HepG2 (cell line): ENCODE measurements at regions of chr21 and their contacts with region 1.

Region 1: DNA sequence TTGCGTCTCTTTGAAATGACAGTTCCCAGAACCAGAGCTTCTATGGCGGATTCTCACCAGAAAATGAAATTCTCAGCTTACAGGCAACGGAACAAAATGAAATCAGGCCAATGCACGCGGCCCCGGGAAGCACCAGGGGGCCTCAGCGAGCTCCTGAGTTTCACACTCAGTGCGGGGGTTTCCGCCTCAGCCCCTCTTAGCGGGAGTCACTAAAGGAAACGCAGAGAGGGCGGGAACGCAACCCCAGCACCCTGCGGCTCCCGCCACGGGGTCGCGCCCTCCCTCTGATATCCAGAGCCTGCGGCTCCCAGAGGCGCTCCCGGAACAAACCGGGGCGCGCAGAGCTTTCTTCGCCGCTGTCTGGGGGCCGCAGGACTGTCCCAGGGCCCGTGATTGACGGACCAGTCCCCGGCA is 7.9 kb upstream of the COL6A1 start:
- DNase-seq: peak; percentile 49
- ATAC-seq: peak; percentile 61
- H3K4me3 ChIP-seq: peak overlapping the region; percentile 52 to 75 (median 55); a peak in 5 of 6 replicates
- H3K27ac ChIP-seq: no peak overlapping the region
- H3K4me1 ChIP-seq: peaks cover 31% of the 10 kb centered on the region
- H3K27me3 ChIP-seq: peaks cover 19 to 46% of the 10 kb centered on the region in 2 experiments
- CTCF ChIP-seq: peak; percentile 69
- EP300 ChIP-seq: no peak
- POLR2A ChIP-seq: no peak
- RAD21 ChIP-seq: peak; percentile 42; the same call in 1 of the 2 replicates

Region 2: GRCh38 chr21:45954261-45954660 is 19.4 kb before region 1 on chr21:
- CTCF ChIA-PET with region 1: no interaction called
- POLR2A ChIA-PET with region 1: no interaction called
- in situ Hi-C with region 1: no loop called
- intact Hi-C with region 1: no loop called
- DNase-seq: no peak
- ATAC-seq: peak; percentile 32; the same call in 1 of the 3 replicates
- H3K4me3 ChIP-seq: no peak overlapping the region
- H3K27ac ChIP-seq: no peak overlapping the region
- H3K4me1 ChIP-seq: no peaks in the 10 kb centered on the region
- H3K27me3 ChIP-seq: peaks cover 1 to 43% of the 10 kb centered on the region in 2 experiments; a peak in 4 of 5 replicates
- CTCF ChIP-seq: no peak
- EP300 ChIP-seq: no peak
- POLR2A ChIP-seq: no peak
- RAD21 ChIP-seq: no peak

Region 3: GRCh38 chr21:46122237-46122671 is 148.6 kb after region 1 on chr21:
- CTCF ChIA-PET with region 1: no interaction called
- POLR2A ChIA-PET with region 1: no interaction called
- in situ Hi-C with region 1: loop called (anchors 5 kb)
- intact Hi-C with region 1: no loop called
- DNase-seq: no peak
- ATAC-seq: no peak
- H3K4me3 ChIP-seq: no peak overlapping the region
- H3K27ac ChIP-seq: no peak overlapping the region
- H3K4me1 ChIP-seq: no peaks in the 10 kb centered on the region
- H3K27me3 ChIP-seq: peaks cover 1 to 26% of the 10 kb centered on the region in 2 experiments; a peak in 2 of 5 replicates
- CTCF ChIP-seq: no peak
- EP300 ChIP-seq: no peak
- POLR2A ChIP-seq: no peak
- RAD21 ChIP-seq: no peak

Region 4: DNA sequence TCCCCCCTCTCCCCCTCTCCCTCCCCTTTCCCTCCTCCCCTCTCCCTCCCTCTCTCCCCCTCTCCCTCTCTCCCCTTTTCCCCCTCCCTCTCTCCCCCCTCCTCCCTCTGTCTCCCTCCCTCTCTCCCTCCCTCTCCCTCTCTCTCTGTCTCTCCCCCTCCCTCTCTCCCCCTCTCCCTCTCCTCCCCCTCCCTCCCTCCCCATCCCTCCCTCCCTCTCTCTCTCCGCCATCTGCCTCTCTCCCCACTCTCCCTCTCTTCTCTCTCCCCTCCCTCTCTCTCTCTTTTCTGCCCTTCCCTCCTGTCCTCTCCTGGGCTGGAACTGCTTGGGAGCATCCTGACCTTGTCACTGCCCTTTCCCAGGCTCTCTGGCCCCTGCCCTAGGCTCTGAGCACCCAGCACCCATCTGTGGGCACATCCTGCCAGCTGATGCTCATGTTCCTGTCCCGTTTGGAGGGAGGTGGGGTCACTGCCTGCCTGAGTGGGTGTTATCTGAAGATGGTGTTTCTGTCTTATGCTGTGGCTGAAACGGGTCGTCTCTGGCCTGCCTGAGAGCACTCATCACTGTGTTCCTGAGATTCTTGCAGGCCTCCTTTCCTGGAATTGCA is 170.9 kb after region 1 on chr21:
- CTCF ChIA-PET with region 1: no interaction called
- POLR2A ChIA-PET with region 1: interaction called, 7 read pairs
- in situ Hi-C with region 1: no loop called
- intact Hi-C with region 1: loop called (anchors 5 kb)
- DNase-seq: no peak
- ATAC-seq: no peak
- H3K4me3 ChIP-seq: no peak overlapping the region
- H3K27ac ChIP-seq: no peak overlapping the region
- H3K4me1 ChIP-seq: peaks cover 33% of the 10 kb centered on the region
- H3K27me3 ChIP-seq: no peaks in the 10 kb centered on the region
- CTCF ChIP-seq: no peak
- EP300 ChIP-seq: no peak
- POLR2A ChIP-seq: no peak
- RAD21 ChIP-seq: no peak

Region 5: DNA sequence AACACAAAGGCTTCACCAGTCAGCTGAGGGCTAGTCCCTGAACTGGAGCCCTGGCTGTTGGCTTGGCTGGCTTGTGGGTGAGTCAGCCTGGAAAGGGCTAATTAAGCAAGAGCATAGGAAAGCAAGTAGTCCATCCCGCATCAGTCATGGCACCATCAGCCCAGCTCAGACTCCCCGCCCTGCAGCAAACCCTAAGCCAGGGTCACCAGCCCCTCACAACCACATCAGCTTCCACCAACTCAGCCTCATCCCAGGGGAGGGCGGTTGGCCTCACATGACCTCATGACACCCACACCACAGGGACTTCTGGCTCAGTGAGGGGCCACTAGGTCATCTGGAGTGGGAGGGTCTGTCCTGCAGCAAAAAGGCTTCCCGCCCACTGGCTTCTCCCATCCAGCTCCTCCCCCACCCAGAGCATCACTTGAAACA is 217.6 kb after region 1 on chr21:
- CTCF ChIA-PET with region 1: no interaction called
- POLR2A ChIA-PET with region 1: no interaction called
- in situ Hi-C with region 1: no loop called
- intact Hi-C with region 1: loop called (anchors 10 kb)
- DNase-seq: no peak
- ATAC-seq: no peak
- H3K4me3 ChIP-seq: no peak overlapping the region
- H3K27ac ChIP-seq: no peak overlapping the region
- H3K4me1 ChIP-seq: peaks cover 31% of the 10 kb centered on the region
- H3K27me3 ChIP-seq: no peaks in the 10 kb centered on the region
- CTCF ChIP-seq: no peak
- EP300 ChIP-seq: no peak
- POLR2A ChIP-seq: no peak
- RAD21 ChIP-seq: no peak

Region 6: GRCh38 chr21:46228345-46229051 is 254.8 kb after region 1 on chr21 and contains the start of gene LSS:
- CTCF ChIA-PET with region 1: no interaction called
- POLR2A ChIA-PET with region 1: interaction called, 6 read pairs
- in situ Hi-C with region 1: loop called (anchors 5 kb)
- intact Hi-C with region 1: no loop called
- DNase-seq: peak; percentile 95
- ATAC-seq: peak; percentile 88
- H3K4me3 ChIP-seq: peak within 1 kb of the TSS; percentile 91 to 99 (median 98)
- H3K27ac ChIP-seq: peak within 1 kb of the TSS; percentile 78
- H3K4me1 ChIP-seq: peaks cover 61% of the 10 kb centered on the region
- H3K27me3 ChIP-seq: no peaks in the 10 kb centered on the region
- CTCF ChIP-seq: no peak
- EP300 ChIP-seq: no peak
- POLR2A ChIP-seq: peak in 1 of 2 experiments; percentile 46; a peak in 2 of 4 replicates
- RAD21 ChIP-seq: 0 out of 2 replicates have a peak, but pooled peaks have one; percentile 9
- total RNA-seq, gene LSS: 73.5 and 113 TPM in 2 replicates

Region 7: DNA sequence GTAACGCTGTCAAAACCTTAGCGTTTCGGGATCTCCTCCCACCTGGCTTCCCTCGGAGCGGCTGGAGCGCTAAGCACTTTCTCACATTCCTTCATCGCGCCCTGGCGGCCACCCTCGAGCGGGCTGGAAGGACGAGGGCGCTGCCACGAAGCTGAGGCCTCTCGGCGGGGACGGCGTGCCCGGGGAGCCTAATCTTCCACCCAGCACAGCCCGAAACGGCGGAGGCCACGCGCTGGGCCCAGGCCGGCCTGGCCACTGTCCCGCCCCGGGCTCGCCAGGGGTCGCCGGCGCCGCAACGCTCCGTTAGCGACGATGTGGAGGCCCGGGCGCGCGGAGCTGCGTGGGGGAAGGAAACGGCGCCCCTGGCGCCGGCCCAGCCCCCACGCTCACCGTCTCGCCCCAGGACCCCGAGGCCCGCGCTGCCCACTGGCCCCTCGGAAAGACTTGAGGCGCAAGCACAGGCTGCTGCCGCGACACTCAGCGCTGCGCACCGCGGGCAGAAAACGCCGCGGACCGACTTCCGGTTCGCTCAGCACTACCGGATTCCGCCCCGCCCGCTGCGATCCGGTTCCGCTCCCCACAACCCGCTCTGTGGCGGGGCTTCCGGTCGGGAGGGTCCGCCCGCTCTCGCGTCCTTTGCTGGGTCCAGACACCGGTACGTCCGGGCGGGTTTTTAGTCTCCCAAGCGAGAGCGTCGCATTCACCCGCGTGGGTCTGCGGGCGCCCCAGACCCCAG is 312.3 kb after region 1 on chr21 and contains the start of gene YBEY:
- CTCF ChIA-PET with region 1: no interaction called
- POLR2A ChIA-PET with region 1: no interaction called
- in situ Hi-C with region 1: loop called (anchors 10 kb)
- intact Hi-C with region 1: no loop called
- DNase-seq: peak; percentile 82
- ATAC-seq: peak; percentile 98
- H3K4me3 ChIP-seq: peak within 1 kb of the TSS; percentile 84 to 98 (median 89)
- H3K27ac ChIP-seq: peak within 1 kb of the TSS; percentile 95
- H3K4me1 ChIP-seq: peaks cover 63% of the 10 kb centered on the region
- H3K27me3 ChIP-seq: no peaks in the 10 kb centered on the region; a peak in 1 of 5 replicates
- CTCF ChIP-seq: peak; percentile 62
- EP300 ChIP-seq: no peak
- POLR2A ChIP-seq: peak; percentile 75 to 80
- RAD21 ChIP-seq: peak; percentile 52; the same call in 1 of the 2 replicates
- total RNA-seq, gene YBEY: 6.5 and 8.9 TPM in 2 replicates